Thyroid gland (tissue), 4 donors: ENCODE measurements at regions of chr1 and their contacts with region 1.

Region 1: DNA sequence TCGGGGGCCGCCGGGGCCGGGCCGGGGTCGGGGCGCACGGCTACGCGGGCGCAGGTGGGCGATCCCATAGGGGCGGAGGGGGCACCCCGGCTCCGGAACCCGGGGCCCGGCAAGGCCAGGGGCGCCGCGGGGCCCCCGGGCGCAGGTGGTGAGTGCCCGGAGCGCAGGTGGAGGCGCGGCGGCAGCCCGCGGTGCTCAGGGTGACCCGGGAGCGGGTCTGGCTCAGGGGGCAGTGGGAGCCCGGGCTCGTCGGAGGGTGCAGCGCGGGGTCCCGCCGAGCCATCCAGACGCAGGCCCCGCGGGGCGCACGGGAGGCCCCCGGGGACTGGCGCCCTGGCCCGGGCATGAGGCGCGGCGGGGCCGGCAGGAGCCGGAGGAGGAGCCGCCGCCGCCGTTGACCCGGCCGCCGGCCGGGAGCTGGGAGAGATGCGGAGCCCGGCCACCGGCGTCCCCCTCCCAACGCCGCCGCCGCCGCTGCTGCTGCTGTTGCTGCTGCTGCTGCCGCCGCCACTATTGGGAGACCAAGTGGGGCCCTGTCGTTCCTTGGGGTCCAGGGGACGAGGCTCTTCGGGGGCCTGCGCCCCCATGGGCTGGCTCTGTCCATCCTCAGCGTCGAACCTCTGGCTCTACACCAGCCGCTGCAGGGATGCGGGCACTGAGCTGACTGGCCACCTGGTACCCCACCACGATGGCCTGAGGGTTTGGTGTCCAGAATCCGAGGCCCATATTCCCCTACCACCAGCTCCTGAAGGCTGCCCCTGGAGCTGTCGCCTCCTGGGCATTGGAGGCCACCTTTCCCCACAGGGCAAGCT is 521 bp downstream of the CELSR2 start:
- DNase-seq: no peak
- H3K4me3 ChIP-seq: peak overlapping the region; percentile 27 to 54 (median 40)
- H3K27ac ChIP-seq: peak overlapping the region in 1 of 3 donors; percentile 41
- H3K4me1 ChIP-seq: peaks cover 30 to 36% of the 10 kb centered on the region in 2 donors
- H3K27me3 ChIP-seq: no peaks in the 10 kb centered on the region
- CTCF ChIP-seq: no peak
- POLR2A ChIP-seq: no peak

Region 2: GRCh38 chr1:109193653-109194590 is 55.9 kb before region 1 on chr1:
- intact Hi-C with region 1: no loop called
- DNase-seq: peak in 1 of 2 donors; percentile 32
- H3K4me3 ChIP-seq: no peak overlapping the region
- H3K27ac ChIP-seq: no peak overlapping the region
- H3K4me1 ChIP-seq: no peaks in the 10 kb centered on the region
- H3K27me3 ChIP-seq: no peaks in the 10 kb centered on the region
- CTCF ChIP-seq: peak in 5 of 6 experiments; percentile 18 to 65 (median 64)
- POLR2A ChIP-seq: no peak

Region 3: DNA sequence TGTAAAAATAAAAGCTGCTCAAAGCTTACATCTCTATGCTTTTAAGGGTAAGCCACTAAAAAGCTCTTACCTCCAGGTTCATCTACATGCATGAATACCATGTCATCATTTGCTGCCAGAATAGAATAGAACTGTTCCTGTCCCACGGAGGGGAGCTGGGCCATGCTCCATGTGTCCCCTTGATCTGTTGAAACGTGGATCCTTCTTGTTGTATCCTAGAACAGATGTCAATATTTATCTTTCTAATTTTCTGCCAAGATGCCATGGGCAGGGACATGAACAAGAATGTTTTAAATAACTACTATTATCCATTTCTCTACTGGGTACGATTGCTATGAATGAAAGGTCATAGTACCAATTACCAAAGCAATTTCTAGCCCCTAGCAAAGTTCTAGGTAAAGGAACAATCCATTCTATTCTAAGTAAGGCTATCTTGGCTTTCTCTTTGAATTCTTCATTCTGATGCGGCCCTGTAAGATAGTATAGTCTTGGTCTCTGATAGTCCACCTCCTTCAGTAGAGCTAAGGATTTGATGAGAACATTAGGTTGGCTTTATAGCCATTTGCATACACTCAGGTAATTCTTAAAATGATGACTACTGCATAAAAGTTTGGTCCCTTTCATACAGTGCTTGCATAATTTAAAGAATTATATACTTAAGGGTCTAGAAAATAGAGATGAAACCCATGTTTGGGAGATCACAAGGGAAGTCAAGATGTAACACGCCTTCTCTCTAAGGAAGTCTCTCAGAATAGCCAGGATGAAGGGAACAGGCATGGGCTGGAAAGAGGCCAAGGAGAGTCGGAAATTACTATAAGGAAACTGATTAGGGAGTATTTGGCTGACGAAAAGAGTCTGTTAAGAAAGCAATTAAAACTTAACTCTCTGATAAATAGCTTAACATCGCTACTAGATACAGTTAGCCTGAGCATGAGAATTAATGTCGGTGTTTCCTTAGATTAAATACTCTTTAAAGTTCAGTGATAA is 92.4 kb after region 1 on chr1:
- intact Hi-C with region 1: no loop called
- DNase-seq: no peak
- H3K4me3 ChIP-seq: no peak overlapping the region
- H3K27ac ChIP-seq: no peak overlapping the region
- H3K4me1 ChIP-seq: no peaks in the 10 kb centered on the region
- H3K27me3 ChIP-seq: no peaks in the 10 kb centered on the region
- CTCF ChIP-seq: no peak
- POLR2A ChIP-seq: no peak

Region 4: DNA sequence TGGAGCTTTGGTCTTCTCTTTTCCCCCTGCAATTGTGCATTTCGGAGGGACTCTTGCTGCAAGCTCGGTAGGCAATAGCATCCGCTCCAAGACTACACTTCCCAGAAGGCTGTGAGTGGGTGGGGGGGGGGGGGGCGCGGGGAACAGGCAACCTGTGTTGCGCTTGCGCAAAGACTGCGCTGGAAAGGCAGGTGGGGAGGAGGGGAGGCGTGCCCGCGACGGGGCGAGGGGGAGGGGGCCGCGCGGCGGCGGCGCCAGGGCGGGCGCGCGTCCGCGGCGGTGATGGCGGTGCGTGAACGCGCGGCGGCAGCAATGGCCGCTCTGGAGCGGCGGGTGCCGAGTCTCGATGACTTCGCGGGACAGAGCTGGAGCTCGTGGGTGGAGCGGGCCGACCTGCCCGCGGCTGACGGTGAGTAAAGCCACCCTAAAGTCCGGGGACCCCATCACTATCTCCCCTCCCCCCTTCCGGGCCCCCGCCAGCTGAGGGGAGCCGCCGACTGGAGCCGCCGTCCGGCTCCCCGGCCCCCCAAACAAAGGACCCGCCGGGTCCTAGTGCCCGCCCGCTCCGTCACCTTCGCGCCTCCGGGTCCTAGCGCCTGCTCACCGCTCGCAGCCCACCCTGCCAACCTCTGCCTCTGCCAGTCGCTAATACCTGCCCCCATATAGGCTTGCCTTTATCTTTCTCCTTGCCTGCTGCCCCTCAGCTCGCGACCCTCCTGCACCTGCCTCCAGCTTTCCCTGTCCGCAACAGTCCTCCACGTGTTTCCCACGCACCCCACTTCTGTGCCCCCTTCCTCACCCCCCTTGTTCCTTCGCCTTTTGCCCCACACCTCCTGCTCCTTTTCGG is 234.0 kb after region 1 on chr1 and contains the start of gene ATXN7L2:
- intact Hi-C with region 1: loop called (anchors 10 kb)
- DNase-seq: peak; percentile 90 to 92
- H3K4me3 ChIP-seq: peak within 1 kb of the TSS; percentile 38 to 59 (median 43)
- H3K27ac ChIP-seq: peak within 1 kb of the TSS; percentile 91 to 99 (median 94)
- H3K4me1 ChIP-seq: peaks cover 12 to 16% of the 10 kb centered on the region in 2 donors
- H3K27me3 ChIP-seq: no peaks in the 10 kb centered on the region
- CTCF ChIP-seq: peak in 1 of 6 experiments; percentile 30
- POLR2A ChIP-seq: peak in 1 of 2 donors; percentile 70
- total RNA-seq, gene ATXN7L2: 5.8 to 11.7 (median 8.4) TPM